B cell (primary cell): ENCODE measurements at regions of chr9 and their contacts with region 1.

Region 1: DNA sequence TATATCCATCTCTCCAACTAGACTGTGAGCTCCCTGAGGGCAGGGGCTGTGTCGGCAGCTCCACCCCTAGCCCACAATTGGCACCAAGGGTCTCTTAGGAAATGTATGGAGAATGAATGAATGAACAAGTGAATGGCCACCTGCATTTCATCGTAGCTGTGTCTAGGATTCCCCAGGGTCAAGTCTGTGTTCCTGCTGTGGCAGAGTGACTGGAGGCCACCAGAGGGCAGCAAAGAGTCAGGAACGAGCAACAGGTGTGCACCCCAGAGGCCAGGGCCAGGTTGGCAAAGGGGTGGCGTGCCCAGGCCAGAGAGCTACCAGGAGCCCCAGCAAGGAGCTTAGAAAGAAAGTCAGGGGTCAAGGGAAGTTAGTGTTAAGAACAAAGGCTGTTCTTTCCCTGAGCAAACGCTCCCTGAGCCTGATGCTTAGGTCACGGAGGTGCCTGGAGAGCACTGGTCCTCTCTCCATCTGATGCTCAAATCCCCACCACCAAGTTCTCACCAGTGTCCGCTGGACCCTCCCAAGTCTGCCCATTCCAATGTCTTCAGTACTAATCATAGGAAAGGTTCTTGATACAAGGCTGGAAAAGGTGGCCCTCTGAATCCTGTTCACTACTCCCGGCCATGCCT is 160.7 kb downstream of the PAX5 start:
- DNase-seq: peak; percentile 83
- ATAC-seq: peak; percentile 88
- H3K4me3 ChIP-seq: no peak overlapping the region
- H3K4me3 Mint-ChIP-seq: no peak overlapping the region
- H3K27ac ChIP-seq: peak overlapping the region; percentile 41 to 71
- H3K27ac Mint-ChIP-seq: peak overlapping the region; percentile 94
- H3K4me1 ChIP-seq: peaks cover 30 to 52% of the 10 kb centered on the region in 2 donors
- H3K4me1 Mint-ChIP-seq: peaks cover 66% of the 10 kb centered on the region
- H3K27me3 ChIP-seq: no peaks in the 10 kb centered on the region
- H3K27me3 Mint-ChIP-seq: no peaks in the 10 kb centered on the region
- CTCF ChIP-seq: peak; percentile 89

Region 2: GRCh38 chr9:36862206-36863145 is 10.9 kb before region 1 on chr9:
- CTCF ChIA-PET with region 1: interaction called, 18 read pairs
- POLR2A ChIA-PET with region 1: no interaction called
- intact Hi-C with region 1: no loop called
- DNase-seq: no peak
- ATAC-seq: no peak
- H3K4me3 ChIP-seq: no peak overlapping the region
- H3K4me3 Mint-ChIP-seq: no peak overlapping the region
- H3K27ac ChIP-seq: no peak overlapping the region
- H3K27ac Mint-ChIP-seq: peak overlapping the region; percentile 75
- H3K4me1 ChIP-seq: peaks cover 4 to 34% of the 10 kb centered on the region in 2 donors
- H3K4me1 Mint-ChIP-seq: peaks cover 49% of the 10 kb centered on the region
- H3K27me3 ChIP-seq: no peaks in the 10 kb centered on the region
- H3K27me3 Mint-ChIP-seq: no peaks in the 10 kb centered on the region
- CTCF ChIP-seq: no peak

Region 3: DNA sequence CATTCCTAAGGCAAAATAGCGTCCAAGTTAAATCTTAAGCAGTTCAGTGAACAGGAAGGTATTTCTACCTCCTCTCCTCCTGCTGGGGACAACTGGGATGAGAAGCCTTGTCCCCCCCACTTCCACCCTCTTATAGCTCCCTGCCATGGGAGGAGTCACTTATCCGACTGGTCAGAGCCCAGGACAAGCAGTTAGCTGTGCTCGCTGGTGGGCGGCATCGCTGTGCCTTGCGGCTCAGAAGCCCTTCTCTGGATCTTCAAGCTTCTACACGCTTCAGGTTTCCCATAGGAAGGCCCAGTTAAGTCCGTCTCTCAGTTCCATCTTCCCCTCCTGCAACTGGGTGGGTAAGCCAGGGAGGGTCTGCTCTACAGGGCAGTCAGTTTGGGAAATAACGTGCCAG is 83.5 kb after region 1 on chr9:
- CTCF ChIA-PET with region 1: interaction called, 17 read pairs
- POLR2A ChIA-PET with region 1: no interaction called
- intact Hi-C with region 1: no loop called
- DNase-seq: no peak
- ATAC-seq: no peak
- H3K4me3 ChIP-seq: no peak overlapping the region
- H3K4me3 Mint-ChIP-seq: no peak overlapping the region
- H3K27ac ChIP-seq: peak overlapping the region in 1 of 2 donors; percentile 65
- H3K27ac Mint-ChIP-seq: peak overlapping the region; percentile 74
- H3K4me1 ChIP-seq: peaks cover 0 to 5% of the 10 kb centered on the region in 2 donors
- H3K4me1 Mint-ChIP-seq: peaks cover 61% of the 10 kb centered on the region
- H3K27me3 ChIP-seq: no peaks in the 10 kb centered on the region
- H3K27me3 Mint-ChIP-seq: no peaks in the 10 kb centered on the region
- CTCF ChIP-seq: no peak

Region 4: GRCh38 chr9:36995927-36996705 is 122.8 kb after region 1 on chr9:
- CTCF ChIA-PET with region 1: interaction called, 179 read pairs
- POLR2A ChIA-PET with region 1: interaction called, 3 read pairs
- intact Hi-C with region 1: loop called (anchors 1 kb)
- DNase-seq: peak; percentile 86
- ATAC-seq: peak; percentile 34
- H3K4me3 ChIP-seq: peak overlapping the region in 4 of 5 experiments; percentile 16 to 58 (median 33)
- H3K4me3 Mint-ChIP-seq: peak overlapping the region; percentile 74
- H3K27ac ChIP-seq: peak overlapping the region; percentile 97 to 98
- H3K27ac Mint-ChIP-seq: peak overlapping the region; percentile 96
- H3K4me1 ChIP-seq: peaks cover 96 to 99% of the 10 kb centered on the region in 2 donors
- H3K4me1 Mint-ChIP-seq: peaks cover 94% of the 10 kb centered on the region
- H3K27me3 ChIP-seq: no peaks in the 10 kb centered on the region
- H3K27me3 Mint-ChIP-seq: no peaks in the 10 kb centered on the region
- CTCF ChIP-seq: peak; percentile 76

Region 5: DNA sequence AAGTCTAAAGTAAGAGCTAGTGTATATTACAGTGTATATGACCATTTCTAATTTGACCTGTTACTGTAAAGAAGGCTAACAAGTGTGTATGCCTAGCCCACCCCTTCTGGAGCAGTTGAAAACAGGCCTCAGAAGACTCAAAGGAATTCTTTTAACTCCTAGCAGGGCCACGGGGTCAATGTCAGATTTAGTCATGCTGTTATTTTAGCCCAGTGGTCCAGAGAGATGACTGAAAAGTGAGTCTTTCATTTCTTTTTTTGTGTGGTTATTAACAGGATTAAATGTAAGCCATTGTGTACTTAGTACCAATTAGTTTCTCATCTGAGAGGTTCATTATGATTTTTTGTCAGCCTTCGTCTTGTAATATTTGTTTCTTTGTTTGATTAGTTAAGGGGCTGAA is 271.4 kb after region 1 on chr9:
- CTCF ChIA-PET with region 1: no interaction called
- POLR2A ChIA-PET with region 1: no interaction called
- intact Hi-C with region 1: loop called (anchors 10 kb)
- DNase-seq: no peak
- ATAC-seq: no peak
- H3K4me3 ChIP-seq: no peak overlapping the region
- H3K4me3 Mint-ChIP-seq: peak overlapping the region; percentile 30
- H3K27ac ChIP-seq: peak overlapping the region; percentile 7 to 65
- H3K27ac Mint-ChIP-seq: peak overlapping the region; percentile 43
- H3K4me1 ChIP-seq: peaks cover 20 to 69% of the 10 kb centered on the region in 2 donors
- H3K4me1 Mint-ChIP-seq: peaks cover 60% of the 10 kb centered on the region
- H3K27me3 ChIP-seq: no peaks in the 10 kb centered on the region
- H3K27me3 Mint-ChIP-seq: no peaks in the 10 kb centered on the region
- CTCF ChIP-seq: no peak

Region 6: GRCh38 chr9:37337301-37337890 is 464.0 kb after region 1 on chr9:
- CTCF ChIA-PET with region 1: interaction called, 14 read pairs
- POLR2A ChIA-PET with region 1: no interaction called
- intact Hi-C with region 1: no loop called
- DNase-seq: peak; percentile 49
- ATAC-seq: peak; percentile 50
- H3K4me3 ChIP-seq: peak overlapping the region in 3 of 5 experiments; percentile 10 to 42 (median 10)
- H3K4me3 Mint-ChIP-seq: peak overlapping the region; percentile 82
- H3K27ac ChIP-seq: peak overlapping the region; percentile 34 to 77
- H3K27ac Mint-ChIP-seq: peak overlapping the region; percentile 88
- H3K4me1 ChIP-seq: peaks cover 57 to 86% of the 10 kb centered on the region in 2 donors
- H3K4me1 Mint-ChIP-seq: peaks cover 53% of the 10 kb centered on the region
- H3K27me3 ChIP-seq: no peaks in the 10 kb centered on the region
- H3K27me3 Mint-ChIP-seq: no peaks in the 10 kb centered on the region
- CTCF ChIP-seq: no peak

Region 7: DNA sequence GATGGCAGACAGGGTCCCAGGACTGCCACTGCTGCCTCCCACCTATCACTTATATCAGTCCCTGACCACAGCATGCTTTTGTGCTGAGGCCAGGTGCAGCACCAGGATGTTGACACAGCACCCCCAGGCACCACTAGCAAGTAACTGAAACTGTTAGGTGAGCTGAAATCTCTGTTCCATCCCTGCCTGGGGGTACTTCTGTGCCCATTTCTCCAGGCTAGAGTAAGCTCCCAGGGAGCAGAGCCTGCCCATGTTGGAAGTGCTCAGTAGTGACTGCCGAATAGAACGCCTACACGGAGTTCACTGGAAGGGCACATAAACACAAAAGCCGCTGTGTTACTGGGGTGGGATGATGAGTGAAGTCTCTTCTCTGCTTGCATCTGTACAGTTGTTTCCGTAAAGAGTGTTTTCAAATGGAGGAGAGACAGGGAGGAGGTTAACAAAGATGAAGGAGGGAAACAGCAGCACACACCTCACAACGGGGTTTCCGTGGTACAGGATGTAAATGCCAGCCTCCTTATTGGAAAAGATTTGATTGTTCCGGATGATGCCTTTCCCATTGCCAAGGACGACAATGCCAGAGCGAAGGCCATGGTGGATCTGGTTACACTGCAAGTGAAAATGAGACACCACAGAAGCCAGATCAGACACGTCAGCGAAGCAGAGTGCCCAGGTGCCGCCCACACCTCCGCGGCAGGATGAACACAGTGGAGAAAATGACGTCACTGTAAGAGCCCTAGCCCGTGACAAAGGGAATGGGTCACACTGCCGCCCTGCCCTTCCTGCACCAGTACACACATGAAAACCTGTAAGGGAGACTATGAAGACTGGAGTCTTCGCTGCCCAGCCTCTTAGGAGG is 655.5 kb after region 1 on chr9:
- CTCF ChIA-PET with region 1: no interaction called
- POLR2A ChIA-PET with region 1: no interaction called
- intact Hi-C with region 1: no loop called
- DNase-seq: peak; percentile 82
- ATAC-seq: peak; percentile 80
- H3K4me3 ChIP-seq: no peak overlapping the region
- H3K4me3 Mint-ChIP-seq: peak overlapping the region; percentile 78
- H3K27ac ChIP-seq: peak overlapping the region in 1 of 2 donors; percentile 39
- H3K27ac Mint-ChIP-seq: peak overlapping the region; percentile 84
- H3K4me1 ChIP-seq: peaks cover 0 to 28% of the 10 kb centered on the region in 2 donors
- H3K4me1 Mint-ChIP-seq: peaks cover 37% of the 10 kb centered on the region
- H3K27me3 ChIP-seq: no peaks in the 10 kb centered on the region
- H3K27me3 Mint-ChIP-seq: no peaks in the 10 kb centered on the region
- CTCF ChIP-seq: no peak